ENCODE measurements at regions of chr15 and their contacts with region 1.

Region 1: DNA sequence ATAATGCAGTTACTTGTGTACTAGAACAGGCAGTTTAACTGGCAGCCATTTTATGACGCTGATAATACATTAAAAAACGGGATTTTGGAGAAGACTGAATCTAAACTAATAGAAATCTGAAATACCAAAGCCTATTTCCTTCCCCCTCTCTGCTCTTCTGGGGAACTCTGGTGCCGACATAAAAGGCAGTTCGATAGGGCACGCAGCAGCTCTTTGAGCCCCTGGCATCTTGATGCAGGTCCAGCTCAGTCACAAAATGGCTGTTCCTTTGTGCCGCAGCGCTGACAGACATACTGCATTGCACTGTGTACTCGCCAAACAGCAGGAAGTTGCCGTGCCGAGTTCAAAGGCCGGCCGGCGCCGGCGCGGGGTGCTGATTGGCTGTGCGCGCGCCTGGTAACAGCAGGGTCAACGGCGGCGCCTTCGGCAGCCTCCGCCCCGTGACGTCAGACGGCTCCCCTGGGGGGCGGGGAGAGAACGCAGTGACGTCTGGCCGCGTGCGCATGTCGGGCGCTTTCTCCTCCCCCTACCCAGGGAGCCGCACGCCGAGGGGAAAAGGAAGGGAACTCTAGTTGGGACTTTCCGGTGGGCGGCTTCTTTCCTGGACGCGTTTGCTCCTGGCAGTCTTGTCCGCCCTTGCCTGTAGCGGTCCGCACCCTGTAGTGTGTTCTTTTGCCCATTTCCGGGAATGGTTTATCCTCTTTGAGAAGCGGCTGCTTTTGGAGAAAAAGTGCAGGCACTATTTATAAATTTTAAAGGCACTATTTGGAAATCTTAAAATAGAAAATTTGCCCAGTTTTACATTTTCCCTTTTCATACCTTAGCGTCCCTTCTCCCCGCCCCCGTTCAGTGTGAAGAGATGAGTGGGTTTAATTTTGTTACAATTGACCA is 4.1 kb downstream of the CHD2 start:
- DNase-seq: peak; percentile 99
- ATAC-seq: peak; percentile 86
- H3K4me3 Mint-ChIP-seq: peak overlapping the region; percentile 95
- H3K27ac Mint-ChIP-seq: peak overlapping the region; percentile 100
- H3K4me1 Mint-ChIP-seq: peaks cover 51% of the 10 kb centered on the region
- H3K27me3 Mint-ChIP-seq: no peaks in the 10 kb centered on the region; the same call in 1 of the 2 replicates
- CTCF ChIP-seq: no peak

Region 2: GRCh38 chr15:92797168-92797951 is 106.8 kb before region 1 on chr15:
- CTCF ChIA-PET with region 1: interaction called, 14 read pairs
- POLR2A ChIA-PET with region 1: interaction called, 4 read pairs
- DNase-seq: no peak
- ATAC-seq: peak; percentile 82
- H3K4me3 Mint-ChIP-seq: no peak overlapping the region
- H3K27ac Mint-ChIP-seq: peak overlapping the region; percentile 93
- H3K4me1 Mint-ChIP-seq: peaks cover 8% of the 10 kb centered on the region
- H3K27me3 Mint-ChIP-seq: no peaks in the 10 kb centered on the region
- CTCF ChIP-seq: peak; percentile 56

Region 3: DNA sequence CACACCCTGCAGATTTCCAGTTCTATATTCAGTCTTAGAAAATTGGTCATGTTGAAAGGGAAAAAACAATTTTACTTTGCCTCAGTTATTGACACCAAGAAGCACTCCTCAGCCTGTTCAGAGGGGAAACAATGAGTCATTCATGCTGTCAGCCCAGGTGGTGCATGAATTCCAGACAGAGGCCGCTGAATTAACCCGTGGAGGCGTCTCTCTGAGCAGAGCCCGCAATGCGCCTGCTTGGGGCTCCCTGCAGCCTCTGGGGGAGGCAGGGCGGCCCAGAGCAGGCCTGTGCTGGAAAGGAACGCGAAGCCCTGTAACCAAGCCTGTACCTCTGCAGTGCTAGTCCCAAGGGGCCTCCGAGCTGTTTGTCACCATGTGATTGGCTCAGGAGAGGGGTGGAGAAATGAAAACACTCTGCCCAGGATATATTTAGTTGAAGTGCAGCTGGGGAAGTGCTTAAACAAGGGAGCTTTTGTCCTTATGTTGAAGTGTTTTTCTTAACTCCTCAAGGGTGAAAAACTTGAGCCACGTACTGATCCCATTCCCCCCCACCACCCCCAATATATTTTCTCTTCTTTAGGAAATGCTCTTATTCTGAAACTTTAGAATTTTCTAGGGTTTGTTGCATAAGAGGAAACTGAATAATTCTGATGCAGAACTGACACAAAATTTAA is 72.4 kb before region 1 on chr15:
- CTCF ChIA-PET with region 1: interaction called, 7 read pairs
- POLR2A ChIA-PET with region 1: interaction called, 19 read pairs
- DNase-seq: peak; percentile 92
- ATAC-seq: peak; percentile 100
- H3K4me3 Mint-ChIP-seq: peak overlapping the region; percentile 50
- H3K27ac Mint-ChIP-seq: peak overlapping the region; percentile 99
- H3K4me1 Mint-ChIP-seq: peaks cover 47% of the 10 kb centered on the region
- H3K27me3 Mint-ChIP-seq: no peaks in the 10 kb centered on the region
- CTCF ChIP-seq: no peak

Region 4: GRCh38 chr15:92917606-92918407 is 13.6 kb after region 1 on chr15:
- CTCF ChIA-PET with region 1: interaction called, 19 read pairs
- POLR2A ChIA-PET with region 1: interaction called, 9 read pairs
- DNase-seq: peak; percentile 94
- ATAC-seq: peak; percentile 17
- H3K4me3 Mint-ChIP-seq: no peak overlapping the region
- H3K27ac Mint-ChIP-seq: peak overlapping the region; percentile 98
- H3K4me1 Mint-ChIP-seq: peaks cover 85% of the 10 kb centered on the region
- H3K27me3 Mint-ChIP-seq: peaks cover 2% of the 10 kb centered on the region; the same call in 1 of the 2 replicates
- CTCF ChIP-seq: peak; percentile 74